ENCODE measurements at regions of chrX and their contacts with region 1.

Region 1: DNA sequence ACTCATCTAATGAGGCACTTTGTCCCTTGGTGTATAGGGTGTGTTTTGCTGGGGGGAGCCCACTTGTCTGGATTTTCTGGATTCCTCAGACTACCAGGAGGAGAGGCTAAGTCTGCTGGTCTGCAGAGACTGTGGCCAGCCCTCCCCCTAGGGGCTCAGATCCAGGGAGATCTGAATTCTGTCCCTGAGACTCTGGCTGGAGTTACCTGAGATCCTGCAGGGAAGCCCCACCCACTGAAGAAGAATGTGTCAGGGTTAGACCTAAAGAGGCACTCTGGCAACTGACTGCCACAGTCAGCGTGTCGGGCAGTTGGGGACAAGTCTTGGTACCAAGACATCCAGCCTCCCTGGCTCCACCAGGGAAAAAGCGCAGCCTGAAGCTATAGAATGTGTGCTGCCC is 138.9 kb downstream of the DCAF12L2 start:
- DNase-seq: no peak
- ATAC-seq: no peak
- H3K4me3 ChIP-seq: no peak overlapping the region
- H3K4me3 Mint-ChIP-seq: no peak overlapping the region
- H3K27ac ChIP-seq: no peak overlapping the region
- H3K27ac Mint-ChIP-seq: no peak overlapping the region
- H3K4me1 ChIP-seq: no peaks in the 10 kb centered on the region
- H3K4me1 Mint-ChIP-seq: no peaks in the 10 kb centered on the region
- H3K27me3 ChIP-seq: no peaks in the 10 kb centered on the region
- H3K27me3 Mint-ChIP-seq: no peaks in the 10 kb centered on the region

Region 2: DNA sequence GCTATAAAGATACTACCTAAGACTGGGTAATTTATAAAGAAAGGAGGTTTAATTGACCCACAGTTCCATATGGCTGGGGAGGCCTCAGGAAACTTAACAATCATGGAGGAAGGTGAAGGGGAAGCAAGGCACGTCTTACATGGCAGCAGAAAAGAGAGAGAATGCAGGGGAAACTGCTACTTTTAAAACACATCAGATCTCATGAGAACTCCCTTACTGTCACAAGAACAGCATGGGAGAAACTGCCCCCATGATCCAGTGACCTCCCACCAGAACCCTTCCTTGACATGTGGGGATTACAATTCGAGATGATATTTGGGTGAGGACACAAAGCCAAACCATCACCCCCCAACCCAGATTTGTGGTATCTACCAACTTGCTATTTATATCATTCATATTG is 693.6 kb before region 1 on chrX:
- CTCF ChIA-PET with region 1: no interaction called
- POLR2A ChIA-PET with region 1: no interaction called
- intact Hi-C with region 1: loop called in 1 of 2 experiments (anchors 10 kb)
- DNase-seq: no peak
- ATAC-seq: no peak
- H3K4me3 ChIP-seq: no peak overlapping the region
- H3K4me3 Mint-ChIP-seq: no peak overlapping the region
- H3K27ac ChIP-seq: no peak overlapping the region
- H3K27ac Mint-ChIP-seq: no peak overlapping the region
- H3K4me1 ChIP-seq: no peaks in the 10 kb centered on the region
- H3K4me1 Mint-ChIP-seq: no peaks in the 10 kb centered on the region
- H3K27me3 ChIP-seq: no peaks in the 10 kb centered on the region
- H3K27me3 Mint-ChIP-seq: no peaks in the 10 kb centered on the region

Measured in naive thymus-derived CD4-positive, alpha-beta T cell (primary cell).